Ovary (tissue), 10 donors: ENCODE measurements at regions of chr9 and their contacts with region 1.

Region 1: GRCh38 chr9:122264360-122265148 is at the starts of genes MRRF and RBM18:
- DNase-seq: peak; percentile 85 to 94 (median 89)
- H3K4me3 ChIP-seq: peak within 1 kb of the TSS; percentile 85
- H3K27ac ChIP-seq: peak within 1 kb of the TSS; percentile 78 to 84
- H3K4me1 ChIP-seq: peaks cover 12% of the 10 kb centered on the region
- H3K27me3 ChIP-seq: no peaks in the 10 kb centered on the region
- CTCF ChIP-seq: peak in 1 of 3 donors; percentile 44
- EP300 ChIP-seq: no peak
- POLR2A ChIP-seq: peak; percentile 74
- total RNA-seq, gene MRRF: 17.9 to 28.5 (median 22.2) TPM
- total RNA-seq, gene RBM18: 8.3 to 23.7 (median 17.0) TPM

Region 2: GRCh38 chr9:122092611-122093506 is 171.7 kb before region 1 on chr9 and contains the start of gene TTLL11:
- intact Hi-C with region 1: loop called in 1 of 4 experiments (anchors 10 kb)
- DNase-seq: peak; percentile 93 to 97 (median 96)
- H3K4me3 ChIP-seq: peak within 1 kb of the TSS; percentile 54
- H3K27ac ChIP-seq: no peak within 1 kb of the TSS
- H3K4me1 ChIP-seq: peaks cover 15% of the 10 kb centered on the region
- H3K27me3 ChIP-seq: no peaks in the 10 kb centered on the region
- CTCF ChIP-seq: no peak
- EP300 ChIP-seq: no peak
- POLR2A ChIP-seq: no peak
- total RNA-seq, gene TTLL11: 7.5 to 13.5 (median 9.2) TPM

Region 3: DNA sequence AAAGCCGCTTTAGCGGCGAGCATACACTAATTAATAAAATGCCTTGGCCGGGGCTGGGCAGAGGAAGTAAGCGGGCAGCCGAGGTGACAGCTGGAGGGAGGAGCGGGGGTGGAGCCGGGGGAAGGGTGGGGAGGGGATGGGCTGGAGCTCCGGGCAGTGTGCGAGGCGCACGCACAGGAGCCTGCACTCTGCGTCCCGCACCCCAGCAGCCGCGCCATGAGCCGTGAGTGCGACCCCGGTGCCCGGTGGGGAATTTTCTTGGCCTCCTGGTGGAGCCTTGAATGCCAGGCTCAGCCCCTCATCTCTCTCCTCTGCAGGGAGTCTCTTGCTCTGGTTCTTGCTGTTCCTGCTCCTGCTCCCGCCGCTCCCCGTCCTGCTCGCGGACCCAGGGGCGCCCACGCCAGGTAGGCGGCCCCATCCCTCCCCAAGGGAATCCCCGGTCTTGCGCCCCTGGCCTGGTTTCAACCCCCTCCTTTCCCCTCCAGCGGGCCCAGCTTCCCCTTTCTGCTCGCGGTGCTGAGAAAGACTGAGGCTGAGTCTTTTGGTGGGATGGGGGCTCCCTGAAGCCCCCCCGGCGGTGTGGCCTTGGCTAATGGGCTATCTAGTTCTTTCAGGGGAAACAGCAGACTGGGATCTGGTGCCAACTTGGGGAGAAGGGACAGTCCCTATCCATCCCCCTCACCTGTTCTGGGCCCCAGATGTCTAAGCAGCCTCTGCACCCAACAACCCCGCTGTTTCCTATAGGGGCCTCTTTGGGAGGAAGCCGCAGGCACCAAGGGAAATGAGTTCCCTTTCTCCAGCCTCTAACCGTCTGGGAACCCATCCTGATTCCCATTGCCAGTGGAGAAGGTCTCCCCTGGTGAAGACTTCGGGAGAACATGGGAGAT is 106.6 kb after region 1 on chr9 and contains the start of gene PTGS1:
- intact Hi-C with region 1: no loop called
- DNase-seq: peak in 1 of 5 donors; percentile 35
- H3K4me3 ChIP-seq: peak within 1 kb of the TSS; percentile 23
- H3K27ac ChIP-seq: no peak within 1 kb of the TSS
- H3K4me1 ChIP-seq: peaks cover 12% of the 10 kb centered on the region
- H3K27me3 ChIP-seq: no peaks in the 10 kb centered on the region
- CTCF ChIP-seq: no peak
- EP300 ChIP-seq: no peak
- POLR2A ChIP-seq: no peak
- total RNA-seq, gene PTGS1: 1.4 to 37.1 (median 7.0) TPM